Right ventricle myocardium superior (tissue), 1 donor: ENCODE measurements at regions of chr1 and their contacts with region 1.

Region 1: GRCh38 chr1:70528590-70529333 is 117.7 kb downstream of the CTH start:
- DNase-seq: no peak
- ATAC-seq: peak; percentile 81

Region 2: DNA sequence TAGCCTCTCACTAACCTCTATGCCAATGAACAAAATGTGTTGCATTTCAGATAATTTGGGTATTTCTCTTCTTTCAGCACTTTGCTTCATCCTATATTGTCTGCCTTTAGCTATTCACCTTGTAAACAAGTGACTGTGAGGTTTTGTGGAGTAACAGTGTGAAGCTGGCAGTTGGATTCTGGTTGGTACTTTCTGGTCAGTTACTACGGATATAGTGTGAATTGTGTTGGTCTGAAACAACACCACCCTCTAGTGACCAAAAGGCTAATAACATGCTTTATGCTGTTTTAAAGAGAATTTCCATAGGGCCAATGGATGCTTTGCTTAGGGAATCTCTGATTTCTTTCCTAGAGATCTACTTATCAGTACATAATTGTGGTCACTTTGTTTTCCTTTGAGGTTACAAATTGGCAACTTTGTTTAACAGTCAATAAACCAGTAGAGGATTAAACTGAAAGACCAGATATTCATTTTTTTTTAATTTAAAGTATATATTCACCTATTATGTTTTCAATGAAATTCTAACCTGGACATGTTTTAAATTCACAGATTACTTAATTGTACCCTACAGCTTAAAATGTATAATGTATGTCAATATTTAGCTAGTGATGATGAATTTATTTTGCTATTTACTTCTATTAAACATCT is 521.3 kb after region 1 on chr1:
- intact Hi-C with region 1: loop called (anchors 2 kb)
- DNase-seq: no peak
- ATAC-seq: peak; percentile 69